Activated B cell treated with CpG ODN at 0.5 μM for 24 hours (primary cell): ENCODE measurements at regions of chr6 and their contacts with region 1.

Region 1: DNA sequence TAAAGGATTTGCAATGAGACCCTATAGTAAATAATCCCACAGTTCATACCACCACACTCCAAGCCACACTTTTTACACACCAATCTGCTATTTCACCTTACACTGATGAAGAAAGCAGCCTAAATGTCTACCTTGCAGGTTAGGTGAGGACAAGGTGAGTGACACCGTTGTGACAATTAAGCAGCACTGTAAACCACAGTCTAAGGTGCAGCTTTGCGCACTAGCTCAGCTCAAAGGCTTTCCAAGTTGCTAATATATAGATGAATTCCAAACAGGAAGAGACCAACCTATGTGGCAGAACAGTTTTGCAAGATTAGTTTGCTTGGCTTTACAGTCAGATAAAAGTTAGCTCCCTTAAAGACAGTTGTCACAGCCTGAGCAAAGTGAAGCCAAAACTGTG is 429.5 kb upstream of the MARCKS start:
- DNase-seq: no peak
- ATAC-seq: no peak
- H3K4me3 Mint-ChIP-seq: no peak overlapping the region
- H3K27ac Mint-ChIP-seq: no peak overlapping the region
- H3K4me1 Mint-ChIP-seq: no peaks in the 10 kb centered on the region
- H3K27me3 Mint-ChIP-seq: no peaks in the 10 kb centered on the region
- CTCF ChIP-seq: no peak

Region 2: GRCh38 chr6:113039005-113039404 is 388.6 kb before region 1 on chr6:
- CTCF ChIA-PET with region 1: no interaction called
- POLR2A ChIA-PET with region 1: no interaction called
- intact Hi-C with region 1: no loop called
- DNase-seq: no peak
- ATAC-seq: no peak
- H3K4me3 Mint-ChIP-seq: no peak overlapping the region
- H3K27ac Mint-ChIP-seq: no peak overlapping the region
- H3K4me1 Mint-ChIP-seq: no peaks in the 10 kb centered on the region
- H3K27me3 Mint-ChIP-seq: no peaks in the 10 kb centered on the region
- CTCF ChIP-seq: no peak

Region 3: DNA sequence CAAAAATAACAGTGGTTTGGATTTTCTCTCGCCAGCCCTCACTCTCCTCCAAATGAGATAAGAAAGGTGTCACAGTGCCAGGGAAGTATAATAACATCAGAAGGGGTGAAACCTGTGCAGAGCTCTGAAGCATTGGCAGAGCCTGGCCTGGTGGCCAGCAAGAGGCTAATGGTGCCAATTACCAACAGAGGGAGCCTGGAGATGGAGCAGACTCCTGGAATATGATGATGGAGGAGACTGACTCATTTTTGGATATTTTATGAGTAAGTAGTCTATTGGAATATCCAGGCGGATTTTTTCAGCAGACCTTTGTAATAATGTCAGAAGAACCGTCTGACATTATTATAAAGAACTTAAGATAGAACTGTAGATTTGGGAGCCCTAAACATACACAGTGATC is 13.1 kb before region 1 on chr6:
- CTCF ChIA-PET with region 1: no interaction called
- POLR2A ChIA-PET with region 1: interaction called, 3 read pairs
- intact Hi-C with region 1: loop called (anchors 1 kb)
- DNase-seq: no peak
- ATAC-seq: no peak
- H3K4me3 Mint-ChIP-seq: no peak overlapping the region
- H3K27ac Mint-ChIP-seq: no peak overlapping the region
- H3K4me1 Mint-ChIP-seq: peaks cover 6% of the 10 kb centered on the region
- H3K27me3 Mint-ChIP-seq: no peaks in the 10 kb centered on the region
- CTCF ChIP-seq: no peak

Region 4: DNA sequence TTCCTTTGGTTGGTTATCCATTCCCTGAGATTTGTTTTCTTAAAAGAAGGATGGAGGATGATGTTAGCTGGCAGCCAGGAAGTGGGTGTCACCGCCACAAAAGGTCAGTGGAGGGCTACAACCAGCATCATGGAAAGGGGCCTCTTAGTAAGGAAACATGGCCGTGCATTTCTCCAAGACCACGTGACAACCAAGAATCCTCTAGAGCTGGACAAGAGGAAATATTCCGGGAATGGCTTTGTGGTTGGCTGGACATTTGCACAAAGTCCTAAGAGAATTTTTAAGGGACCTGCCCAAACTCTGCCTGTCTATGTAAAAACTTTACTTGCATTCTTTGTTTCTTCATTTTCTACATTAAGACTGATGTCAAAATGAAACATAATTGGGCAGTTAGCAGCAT is 29.6 kb after region 1 on chr6:
- CTCF ChIA-PET with region 1: no interaction called
- POLR2A ChIA-PET with region 1: no interaction called
- intact Hi-C with region 1: no loop called
- DNase-seq: no peak
- ATAC-seq: no peak
- H3K4me3 Mint-ChIP-seq: no peak overlapping the region
- H3K27ac Mint-ChIP-seq: no peak overlapping the region
- H3K4me1 Mint-ChIP-seq: no peaks in the 10 kb centered on the region
- H3K27me3 Mint-ChIP-seq: no peaks in the 10 kb centered on the region
- CTCF ChIP-seq: no peak